Dendritic cell treated with granulocyte-macrophage colony-stimulating factor and Interleukin-4, amounts not matched to agents 40 ng/mL and 50 ng/mL, for 4 days (primary cell): ENCODE measurements at regions of chr2 and their contacts with region 1.

Region 1: GRCh38 chr2:207625018-207625907 is at the start of gene METTL21A:
- H3K4me3 Mint-ChIP-seq: peak within 1 kb of the TSS; percentile 91
- H3K27ac Mint-ChIP-seq: peak within 1 kb of the TSS; percentile 95
- H3K4me1 Mint-ChIP-seq: peaks cover 45% of the 10 kb centered on the region
- H3K27me3 Mint-ChIP-seq: no peaks in the 10 kb centered on the region

Region 2: GRCh38 chr2:207710814-207711740 is 85.8 kb after region 1 on chr2 and contains the start of gene CCNYL1:
- intact Hi-C with region 1: loop called (anchors 2 kb)
- H3K4me3 Mint-ChIP-seq: peak within 1 kb of the TSS; percentile 97
- H3K27ac Mint-ChIP-seq: peak within 1 kb of the TSS; percentile 96
- H3K4me1 Mint-ChIP-seq: peaks cover 50% of the 10 kb centered on the region
- H3K27me3 Mint-ChIP-seq: no peaks in the 10 kb centered on the region

Region 3: GRCh38 chr2:208025037-208025813 is 400.0 kb after region 1 on chr2 and contains the start of gene PLEKHM3:
- intact Hi-C with region 1: loop called (anchors 10 kb)
- H3K4me3 Mint-ChIP-seq: peak within 1 kb of the TSS; percentile 91
- H3K27ac Mint-ChIP-seq: peak within 1 kb of the TSS; percentile 94
- H3K4me1 Mint-ChIP-seq: peaks cover 16% of the 10 kb centered on the region
- H3K27me3 Mint-ChIP-seq: no peaks in the 10 kb centered on the region

Region 4: GRCh38 chr2:208265801-208266552 is 640.7 kb after region 1 on chr2 and contains the start of gene PIKFYVE:
- intact Hi-C with region 1: loop called (anchors 1 kb)
- H3K4me3 Mint-ChIP-seq: peak within 1 kb of the TSS; percentile 91
- H3K27ac Mint-ChIP-seq: peak within 1 kb of the TSS; percentile 94
- H3K4me1 Mint-ChIP-seq: peaks cover 43% of the 10 kb centered on the region
- H3K27me3 Mint-ChIP-seq: no peaks in the 10 kb centered on the region